A673 (cell line): ENCODE measurements at regions of chr17 and their contacts with region 1.

Region 1: DNA sequence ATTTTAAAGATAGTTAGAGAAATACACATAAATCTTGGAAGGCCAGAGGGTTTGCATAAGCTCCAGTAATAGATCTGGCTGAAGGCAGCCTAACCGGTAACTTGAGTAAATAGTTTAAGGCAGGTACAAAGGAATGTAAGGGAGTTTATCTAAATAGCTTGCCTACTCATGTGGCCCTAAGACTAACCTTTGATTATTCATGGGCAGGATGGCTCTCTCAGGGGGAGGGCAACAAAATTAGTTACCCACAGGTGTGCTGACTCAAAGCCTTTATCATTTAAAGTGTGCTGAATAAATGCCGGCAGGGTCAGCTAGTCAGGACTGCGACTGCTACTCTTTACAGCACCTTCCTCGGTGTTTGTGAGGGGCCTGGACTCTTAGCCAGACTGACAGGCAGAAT is 761.3 kb upstream of the KIF2B start:
- DNase-seq: no peak
- H3K4me3 ChIP-seq: no peak overlapping the region
- H3K27ac ChIP-seq: no peak overlapping the region
- H3K4me1 ChIP-seq: no peaks in the 10 kb centered on the region
- H3K27me3 ChIP-seq: no peaks in the 10 kb centered on the region
- CTCF ChIP-seq: no peak

Region 2: GRCh38 chr17:51263001-51263400 is 1798.4 kb before region 1 on chr17:
- CTCF ChIA-PET with region 1: no interaction called
- POLR2A ChIA-PET with region 1: no interaction called
- intact Hi-C with region 1: no loop called
- DNase-seq: no peak
- H3K4me3 ChIP-seq: no peak overlapping the region
- H3K27ac ChIP-seq: no peak overlapping the region
- H3K4me1 ChIP-seq: peaks cover 18% of the 10 kb centered on the region
- H3K27me3 ChIP-seq: no peaks in the 10 kb centered on the region
- CTCF ChIP-seq: no peak

Region 3: DNA sequence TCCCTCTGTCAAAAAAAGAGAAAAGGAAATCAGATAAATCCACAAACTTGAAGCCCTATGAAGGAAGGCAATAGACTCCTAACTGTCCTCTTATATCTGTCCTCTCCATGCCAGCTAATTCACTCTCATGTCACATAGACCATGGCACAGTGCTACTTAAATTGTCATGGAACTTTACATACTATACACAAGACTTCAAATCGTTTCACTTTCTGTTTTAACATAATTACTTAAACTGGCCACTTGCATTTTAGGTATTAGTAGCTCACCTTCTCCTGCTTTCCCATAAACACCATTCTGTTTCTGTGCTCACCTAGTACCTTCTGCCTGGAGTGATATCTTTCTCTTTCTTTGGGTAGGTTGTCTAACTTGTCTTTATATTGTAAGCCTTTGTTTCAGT is 55.4 kb before region 1 on chr17:
- CTCF ChIA-PET with region 1: no interaction called
- POLR2A ChIA-PET with region 1: no interaction called
- intact Hi-C with region 1: loop called (anchors 10 kb)
- DNase-seq: no peak
- H3K4me3 ChIP-seq: no peak overlapping the region
- H3K27ac ChIP-seq: no peak overlapping the region
- H3K4me1 ChIP-seq: no peaks in the 10 kb centered on the region
- H3K27me3 ChIP-seq: no peaks in the 10 kb centered on the region
- CTCF ChIP-seq: no peak